PC-9 (cell line): ENCODE measurements at regions of chr3 and their contacts with region 1.

Region 1: GRCh38 chr3:161197855-161198850 is 23.0 kb upstream of the NMD3 start:
- DNase-seq: no peak
- H3K4me3 ChIP-seq: no peak overlapping the region
- H3K27ac ChIP-seq: no peak overlapping the region
- H3K4me1 ChIP-seq: no peaks in the 10 kb centered on the region
- H3K27me3 ChIP-seq: no peaks in the 10 kb centered on the region
- CTCF ChIP-seq: no peak

Region 2: GRCh38 chr3:160851629-160852210 is 346.4 kb before region 1 on chr3:
- CTCF ChIA-PET with region 1: interaction called, 12 read pairs
- POLR2A ChIA-PET with region 1: no interaction called
- intact Hi-C with region 1: no loop called
- DNase-seq: no peak
- H3K4me3 ChIP-seq: no peak overlapping the region
- H3K27ac ChIP-seq: no peak overlapping the region
- H3K4me1 ChIP-seq: no peaks in the 10 kb centered on the region
- H3K27me3 ChIP-seq: no peaks in the 10 kb centered on the region
- CTCF ChIP-seq: no peak

Region 3: GRCh38 chr3:161069511-161070263 is 128.5 kb before region 1 on chr3:
- CTCF ChIA-PET with region 1: interaction called, 25 read pairs
- POLR2A ChIA-PET with region 1: interaction called, 3 read pairs
- intact Hi-C with region 1: no loop called
- DNase-seq: peak; percentile 61 to 77
- H3K4me3 ChIP-seq: no peak overlapping the region
- H3K27ac ChIP-seq: peak overlapping the region; percentile 25
- H3K4me1 ChIP-seq: peaks cover 14% of the 10 kb centered on the region
- H3K27me3 ChIP-seq: no peaks in the 10 kb centered on the region
- CTCF ChIP-seq: no peak

Region 4: GRCh38 chr3:161171618-161172533 is 26.3 kb before region 1 on chr3:
- CTCF ChIA-PET with region 1: no interaction called
- POLR2A ChIA-PET with region 1: no interaction called
- intact Hi-C with region 1: no loop called
- DNase-seq: no peak
- H3K4me3 ChIP-seq: no peak overlapping the region
- H3K27ac ChIP-seq: no peak overlapping the region
- H3K4me1 ChIP-seq: no peaks in the 10 kb centered on the region
- H3K27me3 ChIP-seq: no peaks in the 10 kb centered on the region
- CTCF ChIP-seq: peak; percentile 46; the same call in 1 of the 2 replicates